PC-9 (cell line): ENCODE measurements at regions of chr12 and their contacts with region 1.

Region 1: DNA sequence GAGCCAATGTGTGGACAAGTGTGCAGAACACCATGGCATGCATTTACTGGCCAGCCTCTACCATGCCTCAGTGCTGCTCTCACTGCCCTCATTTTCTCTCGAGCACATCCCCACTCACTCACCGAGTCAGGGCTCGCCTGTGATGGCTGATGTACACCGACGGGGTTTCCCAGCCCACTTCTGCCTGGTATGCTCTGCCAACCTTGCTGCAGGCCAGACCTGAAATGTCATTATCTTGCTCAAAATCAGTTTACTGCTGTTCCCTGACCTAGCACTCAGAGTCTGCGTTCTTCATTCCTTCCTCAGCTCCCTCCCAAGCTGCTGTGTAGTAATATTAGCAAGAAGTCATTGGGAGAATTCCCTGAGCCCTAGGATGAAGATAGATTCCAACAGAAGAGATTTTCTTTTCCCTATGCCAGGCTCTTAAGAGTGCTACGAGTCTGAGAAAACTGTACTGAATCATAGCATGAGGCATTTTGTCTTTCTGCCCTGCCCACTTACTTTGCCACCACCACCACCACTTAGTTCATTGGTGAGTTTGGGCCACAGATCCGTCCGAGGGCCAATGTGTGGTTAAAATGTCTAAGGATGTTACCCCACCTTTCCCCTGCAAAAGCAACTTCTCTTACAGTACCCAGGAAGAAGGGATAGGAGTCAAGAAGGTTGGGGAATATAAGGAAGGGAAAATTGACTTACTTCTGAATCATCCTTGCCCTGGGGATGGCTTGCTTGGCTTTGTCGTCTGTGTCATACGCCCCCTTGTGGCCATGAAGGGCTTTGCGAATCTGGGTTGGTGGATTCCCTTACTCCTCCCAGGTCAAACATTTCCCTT is 51.0 kb downstream of the BMAL2 start:
- DNase-seq: peak; percentile 70 to 89
- H3K4me3 ChIP-seq: no peak overlapping the region
- H3K27ac ChIP-seq: peak overlapping the region; percentile 61
- H3K4me1 ChIP-seq: peaks cover 8% of the 10 kb centered on the region; the same call in 1 of the 2 replicates
- H3K27me3 ChIP-seq: no peaks in the 10 kb centered on the region
- CTCF ChIP-seq: peak; percentile 95

Region 2: DNA sequence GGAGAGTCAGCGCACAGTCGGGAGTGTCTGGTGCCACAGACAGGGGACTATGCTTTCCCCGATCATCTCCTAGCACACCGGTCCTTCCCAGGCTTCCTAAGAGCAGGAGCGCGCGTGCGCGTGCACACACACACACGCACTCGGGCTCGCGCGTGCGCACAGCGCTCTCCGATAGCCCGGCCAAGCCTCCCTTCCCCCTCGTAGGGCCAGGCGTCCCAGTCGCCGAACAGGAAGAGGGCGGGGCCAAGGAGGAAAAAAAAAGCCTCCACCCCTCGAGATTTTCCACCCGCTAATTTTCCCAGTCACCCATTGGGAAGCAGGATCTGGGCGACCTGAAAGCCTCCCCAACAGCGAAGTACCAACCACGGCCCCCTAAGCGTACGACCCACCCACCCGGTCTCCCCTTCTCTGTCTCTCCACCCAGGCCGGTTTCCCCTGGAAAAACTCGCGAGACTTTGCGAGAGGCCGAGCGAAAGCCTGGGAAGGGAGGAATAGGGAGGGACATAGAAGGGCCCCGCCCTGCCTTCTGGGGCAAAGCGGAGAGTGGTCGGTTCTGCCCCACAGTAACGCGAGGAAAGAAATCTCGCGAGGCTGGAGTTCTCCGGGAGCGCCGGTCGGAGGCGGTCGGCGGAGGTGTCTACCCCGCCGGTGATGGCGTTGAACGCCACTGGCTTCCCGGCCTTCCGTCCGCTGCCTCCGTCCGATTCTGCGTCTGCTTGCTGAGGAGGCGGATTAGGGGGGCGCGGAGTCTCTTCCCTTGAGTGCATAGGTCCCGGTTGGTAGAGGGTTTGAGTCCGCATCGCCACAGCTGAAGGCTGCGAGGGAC is 445.6 kb before region 1 on chr12 and contains the starts of genes FGFR1OP2 and INTS13:
- CTCF ChIA-PET with region 1: no interaction called
- POLR2A ChIA-PET with region 1: no interaction called
- intact Hi-C with region 1: loop called (anchors 10 kb)
- DNase-seq: peak; percentile 94 to 100
- H3K4me3 ChIP-seq: peak within 1 kb of the TSS; percentile 90
- H3K27ac ChIP-seq: peak within 1 kb of the TSS; percentile 92
- H3K4me1 ChIP-seq: peaks cover 40% of the 10 kb centered on the region
- H3K27me3 ChIP-seq: no peaks in the 10 kb centered on the region
- CTCF ChIP-seq: no peak
- total RNA-seq, gene FGFR1OP2: 38.8 and 45.7 TPM in 2 replicates
- total RNA-seq, gene INTS13: 34.4 and 40.8 TPM in 2 replicates

Region 3: DNA sequence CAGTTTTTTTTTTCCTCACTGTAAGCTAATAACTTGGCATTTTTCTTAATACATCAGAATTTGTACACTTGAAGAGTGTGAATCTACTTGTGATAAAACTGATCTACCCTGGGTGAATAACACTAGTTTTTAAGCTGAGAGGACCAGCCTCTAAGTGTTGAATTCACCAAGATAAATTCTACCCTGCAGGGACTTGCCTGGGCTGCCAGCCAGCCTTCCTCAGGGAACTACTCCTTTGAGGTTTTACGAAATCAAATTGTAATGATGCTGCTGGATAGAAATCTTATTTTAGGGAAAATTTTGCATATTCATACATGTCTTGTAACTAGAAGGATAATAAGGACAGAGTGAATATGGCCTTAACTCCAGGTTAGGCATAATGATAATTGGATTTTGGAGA is 359.4 kb before region 1 on chr12:
- CTCF ChIA-PET with region 1: no interaction called
- POLR2A ChIA-PET with region 1: no interaction called
- intact Hi-C with region 1: loop called (anchors 5 kb)
- DNase-seq: no peak
- H3K4me3 ChIP-seq: no peak overlapping the region
- H3K27ac ChIP-seq: no peak overlapping the region
- H3K4me1 ChIP-seq: peaks cover 13% of the 10 kb centered on the region; the same call in 1 of the 2 replicates
- H3K27me3 ChIP-seq: no peaks in the 10 kb centered on the region
- CTCF ChIP-seq: no peak

Region 4: GRCh38 chr12:27652174-27652763 is 268.6 kb after region 1 on chr12:
- CTCF ChIA-PET with region 1: no interaction called
- POLR2A ChIA-PET with region 1: no interaction called
- intact Hi-C with region 1: loop called (anchors 2 kb)
- DNase-seq: peak; percentile 42 to 58
- H3K4me3 ChIP-seq: no peak overlapping the region
- H3K27ac ChIP-seq: no peak overlapping the region
- H3K4me1 ChIP-seq: no peaks in the 10 kb centered on the region
- H3K27me3 ChIP-seq: no peaks in the 10 kb centered on the region
- CTCF ChIP-seq: peak; percentile 95